ENCODE measurements at regions of chr12 and their contacts with region 1.

Region 1: DNA sequence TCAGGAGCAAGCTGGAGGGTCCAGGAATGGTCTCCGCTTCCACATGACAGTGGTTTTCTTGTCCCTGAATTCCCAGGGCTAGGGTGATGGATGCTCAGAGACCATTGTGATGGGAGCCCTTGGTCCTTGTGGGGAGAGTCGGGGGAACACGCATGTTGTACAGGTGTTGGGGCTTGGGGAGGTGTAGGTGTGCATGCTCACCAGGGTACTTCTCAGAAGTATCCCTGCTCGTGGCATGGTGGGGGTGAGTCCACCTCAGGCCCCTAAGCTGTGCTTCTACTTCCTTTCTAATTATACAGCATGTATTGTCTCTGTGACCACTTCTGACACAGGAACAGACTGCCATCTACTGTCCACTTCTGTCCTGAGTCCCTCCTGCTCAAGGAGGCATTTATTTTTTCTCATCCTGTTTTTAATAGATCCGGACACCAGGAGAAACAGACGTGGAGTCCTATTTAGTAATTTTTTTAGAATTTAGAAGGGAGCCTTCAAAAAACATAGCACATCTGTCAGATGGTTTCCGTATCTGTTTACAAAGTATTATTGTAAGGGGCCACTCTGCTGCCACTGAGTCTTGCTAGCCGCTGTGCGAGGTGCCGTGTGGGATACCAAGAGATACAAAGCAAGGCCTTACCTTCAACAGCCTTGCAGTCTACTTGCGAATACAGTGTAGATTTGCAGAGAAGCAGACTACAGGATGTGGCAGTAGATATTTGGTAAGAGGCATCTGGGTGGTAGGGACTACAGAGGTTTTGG is 10.5 kb downstream of the NTF3 start:
- DNase-seq: no peak
- H3K4me3 ChIP-seq: no peak overlapping the region
- H3K27ac ChIP-seq: no peak overlapping the region
- H3K4me1 ChIP-seq: peaks cover 0 to 5% (median 0%) of the 10 kb centered on the region in 4 donors
- H3K27me3 ChIP-seq: peaks cover 0 to 61% (median 0%) of the 10 kb centered on the region in 4 donors
- CTCF ChIP-seq: peak; percentile 46 to 55 (median 52)
- EP300 ChIP-seq: no peak
- POLR2A ChIP-seq: no peak

Region 2: GRCh38 chr12:5171701-5172100 is 270.7 kb before region 1 on chr12:
- intact Hi-C with region 1: loop called (anchors 2 kb)
- DNase-seq: no peak
- H3K4me3 ChIP-seq: no peak overlapping the region
- H3K27ac ChIP-seq: no peak overlapping the region
- H3K4me1 ChIP-seq: peaks cover 0 to 9% (median 0%) of the 10 kb centered on the region in 4 donors
- H3K27me3 ChIP-seq: peaks cover 0 to 23% (median 3%) of the 10 kb centered on the region in 4 donors
- CTCF ChIP-seq: peak; percentile 48 to 53 (median 48)
- EP300 ChIP-seq: no peak
- POLR2A ChIP-seq: no peak

Region 3: GRCh38 chr12:5493018-5493417 is 50.6 kb after region 1 on chr12:
- intact Hi-C with region 1: no loop called
- DNase-seq: no peak
- H3K4me3 ChIP-seq: no peak overlapping the region
- H3K27ac ChIP-seq: no peak overlapping the region
- H3K4me1 ChIP-seq: peaks cover 0 to 12% (median 0%) of the 10 kb centered on the region in 4 donors
- H3K27me3 ChIP-seq: no peaks in the 10 kb centered on the region
- CTCF ChIP-seq: no peak
- EP300 ChIP-seq: no peak
- POLR2A ChIP-seq: no peak